ENCODE measurements at regions of chr2 and their contacts with region 1.

Region 1: DNA sequence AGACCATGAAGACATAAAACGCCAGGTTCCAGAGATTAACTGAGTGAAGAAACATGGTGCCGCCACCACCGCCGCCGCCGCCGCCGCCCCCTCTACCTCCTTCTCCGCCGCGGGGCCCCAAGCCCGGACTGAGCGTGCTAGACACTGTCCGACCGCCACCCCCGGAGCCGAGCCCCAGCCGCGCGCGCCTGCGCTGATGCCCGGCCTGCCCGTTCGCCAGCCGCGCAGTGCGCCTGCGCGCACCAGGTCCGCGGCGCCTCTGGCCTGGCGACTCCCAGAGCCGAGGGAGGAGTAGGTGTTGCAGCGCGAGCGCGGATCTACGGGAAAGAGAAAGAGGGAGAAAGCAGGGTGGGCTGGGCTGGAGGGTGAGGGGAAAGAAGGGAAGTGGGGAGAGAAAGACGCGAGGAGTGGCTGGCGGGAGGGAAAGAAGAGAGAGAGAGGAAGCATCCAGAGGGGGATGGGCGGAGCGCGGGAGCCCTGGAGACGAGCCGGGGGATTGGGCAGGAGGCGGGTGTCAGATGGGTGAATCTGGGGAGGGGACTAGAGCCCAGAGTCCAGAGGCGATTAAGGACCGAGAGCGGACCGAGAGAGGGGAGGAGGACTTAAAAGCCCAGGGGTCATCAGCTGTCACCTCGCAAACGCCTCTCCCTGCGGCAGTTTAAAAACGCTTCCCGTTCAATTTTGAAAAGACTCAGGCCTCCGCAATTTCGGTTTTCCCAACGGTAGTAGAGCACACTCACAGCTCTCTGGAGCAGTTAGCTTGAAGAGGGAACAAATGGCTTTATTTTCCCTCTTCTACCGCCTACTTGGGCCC is at the start of gene PGAP1:
- DNase-seq: peak; percentile 93
- H3K4me3 Mint-ChIP-seq: peak within 1 kb of the TSS; percentile 96
- H3K27ac Mint-ChIP-seq: peak within 1 kb of the TSS; percentile 100
- H3K4me1 Mint-ChIP-seq: peaks cover 35% of the 10 kb centered on the region
- H3K27me3 Mint-ChIP-seq: peaks cover 4% of the 10 kb centered on the region
- total RNA-seq, gene PGAP1: 24.5 to 25.5 TPM

Region 2: DNA sequence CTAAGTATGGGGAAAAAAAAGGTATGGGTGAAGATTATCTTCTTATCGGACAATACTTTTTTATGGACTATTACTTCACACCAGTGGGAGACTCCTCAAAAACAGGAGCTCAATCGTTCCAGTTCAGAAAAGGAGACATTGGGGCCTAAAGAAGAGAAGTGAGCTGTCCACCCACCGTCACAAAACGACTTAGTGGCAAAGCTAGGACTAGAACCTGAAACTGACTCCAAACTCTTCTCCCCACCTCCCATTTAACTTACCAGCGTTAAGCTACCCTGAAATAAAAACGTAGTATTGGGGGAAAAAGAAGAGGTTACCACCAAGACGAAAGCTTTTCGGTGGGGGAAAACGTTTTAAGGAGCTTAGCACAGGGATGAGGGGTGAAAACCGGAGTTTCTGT is 127.8 kb before region 1 on chr2:
- CTCF ChIA-PET with region 1: no interaction called
- POLR2A ChIA-PET with region 1: interaction called, 11 read pairs
- intact Hi-C with region 1: loop called (anchors 1 kb)
- DNase-seq: no peak
- H3K4me3 Mint-ChIP-seq: peak overlapping the region; percentile 94
- H3K27ac Mint-ChIP-seq: peak overlapping the region; percentile 83
- H3K4me1 Mint-ChIP-seq: peaks cover 41% of the 10 kb centered on the region
- H3K27me3 Mint-ChIP-seq: peaks cover 5% of the 10 kb centered on the region

Region 3: GRCh38 chr2:196961889-196962288 is 35.1 kb after region 1 on chr2:
- CTCF ChIA-PET with region 1: interaction called, 5 read pairs
- POLR2A ChIA-PET with region 1: interaction called, 18 read pairs
- intact Hi-C with region 1: loop called (anchors 1 kb)
- DNase-seq: peak; percentile 36
- H3K4me3 Mint-ChIP-seq: no peak overlapping the region
- H3K27ac Mint-ChIP-seq: peak overlapping the region; percentile 16
- H3K4me1 Mint-ChIP-seq: peaks cover 27% of the 10 kb centered on the region
- H3K27me3 Mint-ChIP-seq: no peaks in the 10 kb centered on the region

Region 4: DNA sequence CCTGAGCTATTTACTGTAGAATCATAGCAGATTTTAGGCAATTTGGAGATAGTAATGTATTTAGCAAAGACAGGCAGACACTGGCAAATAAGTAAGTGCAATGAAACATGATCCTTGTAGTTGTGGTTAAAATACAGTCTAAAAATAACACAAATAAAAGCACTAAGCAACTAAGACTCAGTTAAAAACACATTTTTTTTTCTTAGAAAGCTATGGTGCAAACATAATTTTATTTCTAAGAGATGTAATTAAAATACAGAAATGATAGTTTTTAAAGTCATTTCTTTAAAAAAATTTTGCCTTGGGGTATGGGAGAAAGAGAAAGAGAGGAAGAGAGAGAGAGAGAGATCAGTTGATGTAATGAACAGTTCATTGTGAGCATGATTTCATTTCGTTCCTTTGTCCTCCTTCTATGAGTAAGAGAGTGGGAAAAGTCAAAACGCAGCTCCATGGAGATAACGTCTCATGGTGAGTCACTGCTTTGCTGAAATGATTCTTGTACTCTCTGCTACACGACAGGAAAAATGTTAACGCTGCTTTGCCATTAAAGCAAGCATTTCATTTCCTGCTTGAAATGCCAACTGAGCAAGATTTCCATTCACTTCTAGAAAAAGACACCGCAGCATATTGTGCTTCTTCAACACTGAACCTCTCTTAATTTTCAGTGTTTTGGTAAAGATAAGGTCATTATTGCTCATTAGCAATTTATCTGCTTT is 61.0 kb after region 1 on chr2:
- CTCF ChIA-PET with region 1: interaction called, 8 read pairs
- POLR2A ChIA-PET with region 1: interaction called, 40 read pairs
- intact Hi-C with region 1: loop called (anchors 1 kb)
- DNase-seq: peak; percentile 61
- H3K4me3 Mint-ChIP-seq: peak overlapping the region; percentile 7
- H3K27ac Mint-ChIP-seq: peak overlapping the region; percentile 88
- H3K4me1 Mint-ChIP-seq: peaks cover 61% of the 10 kb centered on the region
- H3K27me3 Mint-ChIP-seq: no peaks in the 10 kb centered on the region

Region 5: GRCh38 chr2:197209742-197210408 is 283.1 kb after region 1 on chr2:
- CTCF ChIA-PET with region 1: no interaction called
- POLR2A ChIA-PET with region 1: no interaction called
- intact Hi-C with region 1: loop called (anchors 5 kb)
- DNase-seq: peak; percentile 86
- H3K4me3 Mint-ChIP-seq: peak overlapping the region; percentile 58
- H3K27ac Mint-ChIP-seq: peak overlapping the region; percentile 94
- H3K4me1 Mint-ChIP-seq: peaks cover 98% of the 10 kb centered on the region
- H3K27me3 Mint-ChIP-seq: no peaks in the 10 kb centered on the region

Region 6: GRCh38 chr2:197434541-197435513 is 508.1 kb after region 1 on chr2 and contains the start of gene SF3B1:
- CTCF ChIA-PET with region 1: no interaction called
- POLR2A ChIA-PET with region 1: no interaction called
- intact Hi-C with region 1: loop called (anchors 2 kb)
- DNase-seq: peak; percentile 100
- H3K4me3 Mint-ChIP-seq: peak within 1 kb of the TSS; percentile 97
- H3K27ac Mint-ChIP-seq: peak within 1 kb of the TSS; percentile 100
- H3K4me1 Mint-ChIP-seq: peaks cover 45% of the 10 kb centered on the region
- H3K27me3 Mint-ChIP-seq: peaks cover 1% of the 10 kb centered on the region
- total RNA-seq, gene SF3B1: 228 to 245 TPM

Region 7: DNA sequence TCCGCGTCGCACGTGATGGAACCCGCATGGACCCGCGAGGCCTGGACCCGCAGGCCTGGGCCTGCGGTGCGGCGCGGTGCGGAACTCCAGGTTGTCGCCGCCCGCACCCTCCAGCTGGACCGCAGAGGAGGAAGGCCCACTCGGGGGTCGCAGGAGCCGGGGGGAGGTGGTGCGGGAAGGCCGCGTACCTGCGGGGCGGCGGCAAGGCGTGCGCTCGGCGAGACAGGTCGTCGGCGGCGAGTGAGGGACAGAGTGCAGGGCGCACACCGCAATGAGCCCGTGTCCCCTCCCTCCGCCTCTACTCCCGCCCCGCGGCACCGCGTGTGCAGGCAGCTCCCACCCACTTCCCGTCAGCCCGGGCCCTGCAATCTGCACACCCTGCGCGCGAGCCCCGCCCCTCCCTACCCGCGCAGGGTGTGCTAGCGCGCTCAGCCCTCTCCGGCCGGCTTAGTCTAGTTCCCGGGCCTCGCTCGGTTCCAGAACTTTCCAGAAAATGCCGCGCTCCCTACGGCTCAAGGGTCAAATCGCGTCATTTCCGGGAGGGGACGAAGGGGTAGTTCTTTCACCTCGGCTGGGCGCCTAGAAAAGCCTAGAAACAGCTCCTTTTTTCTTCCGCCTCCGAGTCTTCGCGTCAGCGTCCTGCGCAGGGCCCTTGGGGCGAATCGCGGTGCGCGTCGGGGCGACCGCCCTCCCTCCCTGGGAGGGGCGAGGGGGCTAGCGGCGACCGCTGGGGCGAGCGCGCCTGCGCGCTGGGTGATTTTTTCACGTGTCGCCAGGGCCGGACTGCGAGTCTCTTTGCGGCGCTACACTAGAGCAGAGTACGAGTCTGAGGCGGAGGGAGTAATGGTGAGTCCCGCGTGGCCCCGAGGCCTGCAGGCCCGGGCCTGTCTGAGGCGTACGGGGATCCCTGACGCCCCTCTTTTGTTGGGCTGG is 573.1 kb after region 1 on chr2 and contains the starts of genes HSPD1 and HSPE1:
- CTCF ChIA-PET with region 1: no interaction called
- POLR2A ChIA-PET with region 1: interaction called, 3 read pairs
- intact Hi-C with region 1: loop called (anchors 5 kb)
- DNase-seq: peak; percentile 99
- H3K4me3 Mint-ChIP-seq: peak within 1 kb of the TSS; percentile 97
- H3K27ac Mint-ChIP-seq: peak within 1 kb of the TSS; percentile 97
- H3K4me1 Mint-ChIP-seq: peaks cover 56% of the 10 kb centered on the region
- H3K27me3 Mint-ChIP-seq: no peaks in the 10 kb centered on the region
- total RNA-seq, gene HSPD1: 839 to 853 TPM
- total RNA-seq, gene HSPE1: 282 to 283 TPM